ENCODE measurements at regions of chr1 and their contacts with region 1.

Region 1: GRCh38 chr1:156146020-156146768 is 7.2 kb upstream of the SEMA4A start:
- DNase-seq: no peak
- ATAC-seq: peak; percentile 59
- H3K4me3 Mint-ChIP-seq: peak overlapping the region; percentile 66
- H3K27ac Mint-ChIP-seq: peak overlapping the region; percentile 71
- H3K4me1 Mint-ChIP-seq: peaks cover 48% of the 10 kb centered on the region
- H3K27me3 Mint-ChIP-seq: peaks cover 6% of the 10 kb centered on the region
- CTCF ChIP-seq: no peak

Region 2: DNA sequence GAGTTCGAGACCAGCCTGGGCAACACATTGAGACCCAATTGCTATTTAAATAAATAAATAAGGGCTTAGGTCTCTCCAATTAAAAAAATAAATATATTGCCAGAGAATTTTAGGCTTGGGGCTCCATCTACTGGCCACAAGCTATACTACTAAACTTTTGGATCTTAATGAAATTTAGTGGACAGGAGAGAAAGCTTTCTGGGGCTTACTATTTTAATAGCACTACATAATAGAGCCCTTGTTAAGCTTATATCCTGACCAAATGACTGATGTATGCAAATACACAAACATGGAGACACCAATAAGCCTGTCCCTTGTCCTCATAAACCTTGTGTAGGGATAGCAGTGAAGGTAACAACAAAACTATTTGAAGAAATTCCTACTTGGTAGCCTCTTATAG is 173.5 kb after region 1 on chr1:
- CTCF ChIA-PET with region 1: interaction called, 9 read pairs
- POLR2A ChIA-PET with region 1: no interaction called
- intact Hi-C with region 1: loop called (anchors 1 kb)
- DNase-seq: no peak
- ATAC-seq: no peak
- H3K4me3 Mint-ChIP-seq: no peak overlapping the region
- H3K27ac Mint-ChIP-seq: no peak overlapping the region
- H3K4me1 Mint-ChIP-seq: no peaks in the 10 kb centered on the region
- H3K27me3 Mint-ChIP-seq: no peaks in the 10 kb centered on the region
- CTCF ChIP-seq: no peak

Measured in activated B cell treated with CpG ODN at 0.5 μM for 24 hours (primary cell).